Right ventricle myocardium inferior (tissue), 1 donor: ENCODE measurements at regions of chr1 and their contacts with region 1.

Region 1: GRCh38 chr1:19439464-19440171 is 45.7 kb downstream of the CAPZB start:
- DNase-seq: no peak
- ATAC-seq: peak; percentile 50

Region 2: GRCh38 chr1:19400875-19401534 is 38.6 kb before region 1 on chr1:
- intact Hi-C with region 1: loop called (anchors 5 kb)
- DNase-seq: no peak
- ATAC-seq: no peak

Region 3: DNA sequence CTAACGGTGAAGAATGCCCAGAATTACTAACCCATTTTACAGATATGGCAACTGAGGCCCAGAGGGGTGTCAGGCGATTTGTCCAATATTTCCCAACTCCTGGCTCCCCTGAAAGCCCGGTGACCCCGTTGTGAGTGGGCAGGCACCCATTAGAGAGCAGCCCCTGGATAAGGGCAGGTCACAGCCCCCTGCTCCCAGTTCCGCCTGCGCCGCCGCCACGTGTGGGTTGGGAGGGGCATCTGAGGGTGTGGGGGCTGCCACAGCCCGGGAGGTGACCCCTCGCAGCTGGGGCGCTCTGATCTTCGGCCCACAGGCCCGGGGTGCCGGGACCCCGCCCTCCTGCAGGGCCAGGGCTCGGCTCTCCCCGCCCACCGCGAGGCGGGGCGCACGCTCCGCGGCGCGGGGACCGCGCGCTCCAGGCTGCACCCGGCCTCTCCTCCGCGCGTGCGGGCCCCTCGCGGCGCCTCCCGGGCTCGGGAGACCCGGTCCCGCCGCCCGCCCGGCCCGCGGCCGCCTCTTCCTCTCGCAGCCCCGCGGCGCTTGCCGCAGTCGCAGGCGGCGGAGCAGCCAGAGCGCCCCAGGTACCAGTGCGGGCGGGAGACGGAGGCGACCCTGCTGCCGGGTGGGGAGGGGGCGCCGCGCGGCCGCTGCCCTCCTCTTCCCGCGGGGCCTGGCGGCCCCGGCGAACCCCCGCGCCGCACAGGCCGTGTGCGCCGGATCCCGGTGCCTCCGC is 225.0 kb after region 1 on chr1 and contains the start of gene HTR6:
- intact Hi-C with region 1: no loop called
- DNase-seq: peak; percentile 53
- ATAC-seq: no peak
- total RNA-seq, gene HTR6: not detected